CD4-positive, alpha-beta T cell (primary cell): ENCODE measurements at regions of chr14 and their contacts with region 1.

Region 1: GRCh38 chr14:61598980-61599379 is 96.3 kb upstream of the HIF1A start:
- DNase-seq: peak in 1 of 14 experiments; percentile 26
- ATAC-seq: peak; percentile 29
- H3K4me3 ChIP-seq: no peak overlapping the region
- H3K4me3 Mint-ChIP-seq: no peak overlapping the region
- H3K27ac ChIP-seq: no peak overlapping the region
- H3K27ac Mint-ChIP-seq: no peak overlapping the region
- H3K4me1 ChIP-seq: peaks cover 11% of the 10 kb centered on the region
- H3K4me1 Mint-ChIP-seq: peaks cover 34% of the 10 kb centered on the region
- H3K27me3 ChIP-seq: no peaks in the 10 kb centered on the region
- H3K27me3 Mint-ChIP-seq: no peaks in the 10 kb centered on the region
- CTCF ChIP-seq: no peak

Region 2: GRCh38 chr14:61628016-61628725 is 29.2 kb after region 1 on chr14:
- CTCF ChIA-PET with region 1: no interaction called
- POLR2A ChIA-PET with region 1: no interaction called
- intact Hi-C with region 1: no loop called
- DNase-seq: no peak
- ATAC-seq: no peak
- H3K4me3 ChIP-seq: no peak overlapping the region
- H3K4me3 Mint-ChIP-seq: no peak overlapping the region
- H3K27ac ChIP-seq: no peak overlapping the region
- H3K27ac Mint-ChIP-seq: no peak overlapping the region
- H3K4me1 ChIP-seq: no peaks in the 10 kb centered on the region
- H3K4me1 Mint-ChIP-seq: no peaks in the 10 kb centered on the region
- H3K27me3 ChIP-seq: no peaks in the 10 kb centered on the region
- H3K27me3 Mint-ChIP-seq: no peaks in the 10 kb centered on the region
- CTCF ChIP-seq: no peak

Region 3: DNA sequence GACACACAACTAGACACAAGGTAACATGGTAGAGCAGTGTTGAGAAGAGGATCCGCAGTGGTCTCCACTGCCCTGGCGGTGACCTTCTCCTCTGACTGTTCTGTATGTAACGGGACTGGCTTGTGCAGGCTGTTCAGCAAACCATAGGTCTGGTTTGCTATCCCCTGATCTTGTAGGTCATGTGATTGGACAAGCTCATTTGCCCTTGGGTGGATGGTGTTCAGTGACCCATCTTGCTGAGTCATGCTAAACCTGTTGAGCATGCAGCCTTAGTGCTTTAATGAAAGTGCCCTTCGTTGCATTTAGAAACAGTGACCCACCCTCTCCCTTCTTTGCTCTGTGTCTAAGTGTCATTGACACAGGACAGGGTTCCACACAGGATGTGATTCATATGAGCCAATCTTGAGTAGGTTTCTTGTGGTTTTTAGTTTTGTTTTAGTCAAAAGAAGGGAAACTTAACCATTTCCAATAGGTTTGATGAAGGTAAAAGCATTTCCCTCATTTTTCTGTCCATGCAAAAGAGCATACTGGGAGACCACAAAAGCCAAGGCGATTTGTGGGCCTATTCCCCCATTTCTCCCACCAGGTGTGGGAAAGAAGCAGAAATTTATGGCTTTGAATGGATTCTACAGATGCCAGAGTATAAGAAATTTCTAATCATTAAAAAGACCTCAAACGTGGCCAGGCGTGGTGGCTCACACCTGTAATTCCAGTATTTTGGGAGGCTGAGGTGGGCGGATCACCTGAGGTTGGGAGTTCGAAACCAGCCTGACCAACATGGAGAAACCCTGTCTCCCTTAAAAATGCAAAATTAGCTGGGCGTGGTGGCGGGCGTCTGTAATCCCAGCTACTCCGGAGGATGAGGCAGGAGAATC is 63.7 kb after region 1 on chr14:
- CTCF ChIA-PET with region 1: no interaction called
- POLR2A ChIA-PET with region 1: no interaction called
- intact Hi-C with region 1: loop called in 1 of 2 experiments (anchors 10 kb)
- DNase-seq: peak in 13 of 14 experiments; percentile 13 to 92 (median 22)
- ATAC-seq: peak; percentile 75
- H3K4me3 ChIP-seq: peak overlapping the region; percentile 33
- H3K4me3 Mint-ChIP-seq: peak overlapping the region; percentile 70
- H3K27ac ChIP-seq: peak overlapping the region; percentile 54 to 70
- H3K27ac Mint-ChIP-seq: peak overlapping the region; percentile 86
- H3K4me1 ChIP-seq: peaks cover 49% of the 10 kb centered on the region
- H3K4me1 Mint-ChIP-seq: peaks cover 69% of the 10 kb centered on the region
- H3K27me3 ChIP-seq: no peaks in the 10 kb centered on the region
- H3K27me3 Mint-ChIP-seq: no peaks in the 10 kb centered on the region
- CTCF ChIP-seq: no peak